Right ventricle myocardium superior (tissue), 1 donor: ENCODE measurements at regions of chr9 and their contacts with region 1.

Region 1: GRCh38 chr9:78369639-78370219 is 72.8 kb downstream of the PSAT1 start:
- DNase-seq: peak; percentile 81
- ATAC-seq: peak; percentile 61

Region 2: DNA sequence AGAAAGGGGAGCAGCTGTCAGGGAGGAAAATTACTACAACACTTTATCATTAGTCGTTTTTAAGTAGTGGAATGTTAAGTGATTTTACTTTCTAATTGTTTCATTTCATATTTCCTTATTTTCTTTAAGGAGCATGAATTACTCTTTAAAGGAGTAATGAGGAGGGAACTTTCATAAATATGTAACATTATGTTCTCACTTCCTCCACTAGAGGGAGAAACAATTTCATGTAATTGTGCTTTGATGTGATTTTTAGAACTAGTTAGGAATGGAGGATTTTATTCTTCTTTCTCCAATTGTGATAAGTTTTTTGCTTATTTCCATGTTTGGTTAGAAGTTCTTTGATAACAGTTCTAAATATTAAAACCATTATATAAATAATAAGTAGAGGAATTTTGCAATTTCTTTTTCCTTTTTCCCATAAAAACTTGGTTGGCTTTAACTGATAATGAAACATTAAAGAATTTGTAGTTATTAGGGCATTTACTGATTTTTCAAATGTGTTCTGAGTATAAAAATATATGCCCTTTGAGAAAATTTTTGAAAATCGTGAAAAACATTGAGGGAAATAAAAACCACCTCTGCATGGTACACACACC is 108.2 kb before region 1 on chr9:
- intact Hi-C with region 1: loop called (anchors 5 kb)
- DNase-seq: no peak
- ATAC-seq: no peak